ENCODE measurements at regions of chr2 and their contacts with region 1.

Region 1: GRCh38 chr2:7725171-7725849 is 808.1 kb downstream of the RNF144A start:
- DNase-seq: peak; percentile 73
- ATAC-seq: peak; percentile 51
- H3K4me3 ChIP-seq: no peak overlapping the region
- H3K27ac ChIP-seq: no peak overlapping the region; the same call in 1 of the 2 replicates
- H3K4me1 ChIP-seq: peaks cover 4% of the 10 kb centered on the region; the same call in 1 of the 2 replicates
- H3K27me3 ChIP-seq: no peaks in the 10 kb centered on the region; a peak in 1 of 4 replicates
- CTCF ChIP-seq: peak in 1 of 3 experiments; percentile 24; a peak in 1 of 6 replicates
- EP300 ChIP-seq: peak; percentile 63 to 68; a peak in 2 of 4 replicates
- POLR2A ChIP-seq: no peak
- RAD21 ChIP-seq: peak; percentile 27; the same call in 1 of the 2 replicates

Region 2: DNA sequence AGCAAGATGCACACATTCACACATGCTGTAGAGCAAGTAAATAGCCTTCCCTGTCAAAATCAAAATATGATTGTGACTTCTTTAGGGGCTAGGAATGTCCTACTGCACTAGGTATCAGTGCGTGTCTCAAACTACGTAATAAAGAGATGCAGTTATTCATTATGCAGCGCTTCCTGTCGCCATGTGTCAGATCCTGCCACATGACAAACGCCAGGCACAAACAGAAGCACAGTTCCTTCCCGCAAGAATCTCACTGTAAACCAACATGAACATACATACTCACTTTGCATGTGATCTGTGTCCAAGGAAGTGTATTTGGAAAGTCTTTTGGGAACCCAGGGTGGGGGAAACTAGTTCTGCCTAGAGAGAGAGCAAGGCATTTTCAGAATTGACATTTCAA is 208.2 kb before region 1 on chr2:
- CTCF ChIA-PET with region 1: no interaction called
- POLR2A ChIA-PET with region 1: no interaction called
- RAD21 ChIA-PET with region 1: interaction called, 3 read pairs
- SMC1A ChIA-PET with region 1: interaction called, 4 read pairs
- in situ Hi-C with region 1: no loop called
- intact Hi-C with region 1: loop called (anchors 5 kb)
- DNase-seq: no peak
- ATAC-seq: peak; percentile 68
- H3K4me3 ChIP-seq: no peak overlapping the region
- H3K27ac ChIP-seq: no peak overlapping the region
- H3K4me1 ChIP-seq: peaks cover 17% of the 10 kb centered on the region
- H3K27me3 ChIP-seq: peaks cover 0 to 2% of the 10 kb centered on the region in 2 experiments; a peak in 1 of 4 replicates
- CTCF ChIP-seq: no peak
- EP300 ChIP-seq: no peak; a peak in 2 of 4 replicates
- POLR2A ChIP-seq: no peak
- RAD21 ChIP-seq: no peak

Region 3: GRCh38 chr2:7625392-7626138 is 99.7 kb before region 1 on chr2:
- CTCF ChIA-PET with region 1: interaction called, 3 read pairs
- POLR2A ChIA-PET with region 1: no interaction called
- RAD21 ChIA-PET with region 1: interaction called, 5 read pairs
- SMC1A ChIA-PET with region 1: interaction called, 14 read pairs
- in situ Hi-C with region 1: no loop called
- intact Hi-C with region 1: no loop called
- DNase-seq: peak; percentile 19
- ATAC-seq: peak; percentile 89
- H3K4me3 ChIP-seq: no peak overlapping the region; the same call in 1 of the 2 replicates
- H3K27ac ChIP-seq: peak overlapping the region; percentile 18; the same call in 1 of the 2 replicates
- H3K4me1 ChIP-seq: peaks cover 13% of the 10 kb centered on the region
- H3K27me3 ChIP-seq: no peaks in the 10 kb centered on the region; a peak in 1 of 4 replicates
- CTCF ChIP-seq: no peak
- EP300 ChIP-seq: peak in 1 of 2 experiments; percentile 80; a peak in 2 of 4 replicates
- POLR2A ChIP-seq: no peak
- RAD21 ChIP-seq: no peak

Region 4: DNA sequence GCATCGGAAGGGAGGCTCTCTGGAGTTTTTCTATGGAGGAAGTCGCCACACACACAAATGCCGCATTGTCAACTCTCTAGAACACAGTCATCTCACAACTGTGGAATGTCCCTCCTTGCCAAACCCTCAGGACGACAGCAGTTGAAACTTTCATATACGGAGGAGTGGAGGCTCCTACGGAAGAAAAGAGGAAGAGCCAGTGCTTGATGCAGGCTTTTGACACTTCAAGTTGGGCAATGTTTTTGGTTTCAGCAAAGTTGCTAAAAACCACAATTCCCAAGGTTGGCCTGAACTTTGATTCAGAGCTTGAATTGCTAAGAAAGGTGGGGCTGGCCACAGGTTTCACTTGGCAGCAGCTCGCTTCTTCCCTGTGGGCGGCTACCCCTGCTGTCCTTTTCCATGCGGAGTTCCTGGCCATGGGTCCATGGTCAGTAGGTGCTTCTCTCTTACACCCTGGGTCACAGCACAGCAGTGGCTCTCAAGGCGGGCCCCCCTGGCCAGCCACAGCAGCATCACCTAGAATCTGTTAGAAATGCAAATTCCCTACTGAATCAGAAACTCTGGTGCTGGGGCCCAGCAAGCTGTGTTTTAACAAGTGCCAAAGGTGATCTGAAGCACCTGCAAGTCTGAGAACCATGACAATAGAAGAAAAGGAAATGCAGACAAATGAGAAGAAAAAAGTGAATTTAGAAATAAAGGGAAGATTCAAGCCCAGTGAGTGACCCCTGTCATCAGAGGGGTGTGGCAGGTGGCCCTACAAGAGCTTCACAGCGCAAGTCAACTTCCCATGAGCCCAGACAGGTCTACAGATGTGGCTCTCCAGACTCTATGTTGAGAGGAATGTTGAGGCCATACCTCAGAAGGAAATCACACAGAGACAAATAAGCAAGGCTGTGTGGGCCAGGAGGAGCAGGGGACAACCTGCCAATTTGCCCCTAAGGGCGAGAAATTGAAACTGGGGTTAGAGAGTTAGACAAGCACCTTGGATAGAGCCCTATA is 48.4 kb after region 1 on chr2:
- CTCF ChIA-PET with region 1: interaction called, 4 read pairs
- POLR2A ChIA-PET with region 1: interaction called, 5 read pairs
- RAD21 ChIA-PET with region 1: interaction called, 31 read pairs
- SMC1A ChIA-PET with region 1: interaction called, 94 read pairs
- in situ Hi-C with region 1: no loop called
- intact Hi-C with region 1: loop called (anchors 2 kb)
- DNase-seq: peak; percentile 91
- ATAC-seq: peak; percentile 86
- H3K4me3 ChIP-seq: peak overlapping the region; percentile 45
- H3K27ac ChIP-seq: peak overlapping the region; percentile 48
- H3K4me1 ChIP-seq: peaks cover 19% of the 10 kb centered on the region
- H3K27me3 ChIP-seq: no peaks in the 10 kb centered on the region
- CTCF ChIP-seq: no peak
- EP300 ChIP-seq: peak; percentile 98 to 99
- POLR2A ChIP-seq: no peak
- RAD21 ChIP-seq: peak; percentile 21; the same call in 1 of the 2 replicates

Region 5: DNA sequence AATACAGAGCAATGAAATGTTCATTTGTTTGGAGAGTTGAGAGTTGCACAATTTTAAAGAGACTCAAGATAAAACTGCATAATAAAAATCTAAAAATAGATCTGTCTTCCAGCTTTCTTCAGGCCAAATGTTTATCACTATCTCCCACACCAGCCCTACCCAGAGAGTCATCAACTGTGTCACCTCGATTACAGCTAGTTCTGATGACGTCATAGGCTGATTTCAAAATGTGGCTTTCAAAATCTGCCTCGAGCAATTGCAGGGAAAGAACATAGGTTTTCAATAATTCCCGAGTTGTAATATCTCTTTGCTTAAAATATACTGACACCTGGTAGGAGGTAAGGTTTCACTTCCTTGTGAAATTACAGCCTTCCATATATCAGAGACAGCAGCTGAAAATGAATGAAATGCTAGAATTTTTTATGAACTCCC is 279.0 kb after region 1 on chr2:
- CTCF ChIA-PET with region 1: no interaction called
- POLR2A ChIA-PET with region 1: no interaction called
- RAD21 ChIA-PET with region 1: interaction called, 6 read pairs
- SMC1A ChIA-PET with region 1: interaction called, 12 read pairs
- in situ Hi-C with region 1: no loop called
- intact Hi-C with region 1: loop called (anchors 2 kb)
- DNase-seq: no peak
- ATAC-seq: peak; percentile 46
- H3K4me3 ChIP-seq: no peak overlapping the region
- H3K27ac ChIP-seq: no peak overlapping the region
- H3K4me1 ChIP-seq: peaks cover 4% of the 10 kb centered on the region; the same call in 1 of the 2 replicates
- H3K27me3 ChIP-seq: no peaks in the 10 kb centered on the region
- CTCF ChIP-seq: no peak
- EP300 ChIP-seq: peak; percentile 69 to 79; a peak in 2 of 4 replicates
- POLR2A ChIP-seq: no peak
- RAD21 ChIP-seq: no peak

Region 6: GRCh38 chr2:8312861-8313830 is 587.8 kb after region 1 on chr2:
- CTCF ChIA-PET with region 1: no interaction called
- POLR2A ChIA-PET with region 1: no interaction called
- RAD21 ChIA-PET with region 1: interaction called, 4 read pairs
- SMC1A ChIA-PET with region 1: interaction called, 16 read pairs
- in situ Hi-C with region 1: no loop called
- intact Hi-C with region 1: no loop called
- DNase-seq: peak; percentile 96
- ATAC-seq: peak; percentile 81
- H3K4me3 ChIP-seq: no peak overlapping the region; the same call in 1 of the 2 replicates
- H3K27ac ChIP-seq: peak overlapping the region; percentile 72
- H3K4me1 ChIP-seq: peaks cover 53% of the 10 kb centered on the region
- H3K27me3 ChIP-seq: no peaks in the 10 kb centered on the region
- CTCF ChIP-seq: no peak
- EP300 ChIP-seq: peak; percentile 46 to 86; a peak in 3 of 4 replicates
- POLR2A ChIP-seq: no peak
- RAD21 ChIP-seq: peak; percentile 29

Region 7: DNA sequence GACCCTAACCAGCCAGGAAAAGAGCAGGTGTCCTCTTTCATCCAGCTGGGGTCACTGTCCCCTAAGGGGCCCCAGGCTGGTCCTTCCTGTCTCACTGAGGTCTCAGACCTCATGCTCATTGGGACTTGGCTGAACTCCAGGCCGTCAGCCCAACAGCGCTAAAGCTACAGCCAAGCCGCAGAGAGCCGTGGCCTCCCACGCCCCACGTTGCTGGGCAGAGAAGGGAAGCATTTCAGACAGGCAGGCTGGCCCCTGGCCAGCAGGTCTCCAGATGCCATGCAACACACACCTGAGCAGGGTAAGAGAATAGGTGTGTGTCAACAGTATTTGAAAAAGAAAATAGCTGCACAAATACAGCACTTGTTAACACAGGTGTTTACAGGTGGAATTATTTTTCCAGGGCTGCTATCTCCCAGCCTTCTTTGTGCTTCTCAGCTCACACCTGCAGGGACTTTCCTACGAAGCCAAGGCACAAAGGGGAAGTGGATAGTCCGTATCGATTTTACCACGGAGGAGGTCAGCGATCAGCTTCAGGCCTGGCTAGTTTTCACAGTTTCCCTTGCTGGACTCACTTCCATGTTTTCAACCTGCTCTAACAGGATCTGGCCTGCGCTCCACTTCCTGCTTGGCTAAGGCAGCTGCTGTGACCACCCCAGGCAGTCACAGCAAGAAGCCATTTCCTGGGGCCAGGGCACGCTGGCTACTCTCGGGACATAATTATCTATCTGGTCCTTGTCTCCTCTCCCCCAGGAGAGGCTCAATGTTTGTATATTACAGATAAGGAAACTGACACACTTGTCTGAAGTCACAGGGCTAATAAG is 800.5 kb after region 1 on chr2:
- CTCF ChIA-PET with region 1: no interaction called
- POLR2A ChIA-PET with region 1: interaction called, 10 read pairs
- RAD21 ChIA-PET with region 1: interaction called, 3 read pairs
- SMC1A ChIA-PET with region 1: no interaction called
- in situ Hi-C with region 1: no loop called
- intact Hi-C with region 1: no loop called
- DNase-seq: peak; percentile 90
- ATAC-seq: peak; percentile 82
- H3K4me3 ChIP-seq: 0 out of 2 replicates have a peak overlapping the region, but pooled peaks have one; percentile 9
- H3K27ac ChIP-seq: peak overlapping the region; percentile 74
- H3K4me1 ChIP-seq: peaks cover 64% of the 10 kb centered on the region
- H3K27me3 ChIP-seq: no peaks in the 10 kb centered on the region
- CTCF ChIP-seq: peak; percentile 54 to 72 (median 58)
- EP300 ChIP-seq: peak in 1 of 2 experiments; percentile 80; a peak in 3 of 4 replicates
- POLR2A ChIP-seq: no peak
- RAD21 ChIP-seq: peak; percentile 88

Measured in GM12878 (cell line).